Activated CD4-positive, alpha-beta T cell treated with anti-CD3 and anti-CD28 coated beads, Interleukin-2, amount 10 ng/mL, durations not matched to agents 24 days and 14 days (primary cell): ENCODE measurements at regions of chr2 and their contacts with region 1.

Region 1: DNA sequence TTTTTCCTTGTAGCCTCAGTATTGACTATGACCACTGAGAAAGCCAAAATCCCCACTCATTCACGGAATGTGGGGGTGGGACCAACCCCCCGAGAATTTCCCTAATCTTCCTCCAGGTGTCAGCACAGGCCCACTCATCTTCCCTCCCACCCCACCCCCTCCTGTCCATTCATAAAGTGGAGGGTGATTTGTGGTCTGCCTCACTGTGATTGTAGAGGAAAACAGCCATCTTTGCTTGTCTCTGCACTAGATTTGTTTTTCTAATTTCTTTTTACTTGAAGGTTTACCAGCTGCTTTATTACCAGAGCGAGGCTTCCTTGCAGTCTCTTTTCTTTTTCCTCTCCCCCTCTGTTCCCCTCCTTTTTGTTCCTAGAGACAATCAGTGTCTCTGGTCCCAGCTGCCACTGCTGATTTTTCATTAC is 171.8 kb downstream of the ICOS start:
- DNase-seq: peak; percentile 81
- H3K4me3 Mint-ChIP-seq: peak overlapping the region; percentile 75
- H3K27ac Mint-ChIP-seq: peak overlapping the region; percentile 93
- H3K4me1 Mint-ChIP-seq: peaks cover 64% of the 10 kb centered on the region
- H3K27me3 Mint-ChIP-seq: no peaks in the 10 kb centered on the region

Region 2: GRCh38 chr2:203730076-203730729 is 378.1 kb before region 1 on chr2:
- intact Hi-C with region 1: loop called (anchors 10 kb)
- DNase-seq: peak; percentile 71
- H3K4me3 Mint-ChIP-seq: peak overlapping the region; percentile 71
- H3K27ac Mint-ChIP-seq: peak overlapping the region; percentile 96
- H3K4me1 Mint-ChIP-seq: peaks cover 79% of the 10 kb centered on the region
- H3K27me3 Mint-ChIP-seq: no peaks in the 10 kb centered on the region

Region 3: GRCh38 chr2:203989521-203989920 is 118.8 kb before region 1 on chr2:
- intact Hi-C with region 1: loop called (anchors 2 kb)
- DNase-seq: no peak
- H3K4me3 Mint-ChIP-seq: peak overlapping the region; percentile 42
- H3K27ac Mint-ChIP-seq: peak overlapping the region; percentile 77
- H3K4me1 Mint-ChIP-seq: peaks cover 32% of the 10 kb centered on the region
- H3K27me3 Mint-ChIP-seq: no peaks in the 10 kb centered on the region

Region 4: DNA sequence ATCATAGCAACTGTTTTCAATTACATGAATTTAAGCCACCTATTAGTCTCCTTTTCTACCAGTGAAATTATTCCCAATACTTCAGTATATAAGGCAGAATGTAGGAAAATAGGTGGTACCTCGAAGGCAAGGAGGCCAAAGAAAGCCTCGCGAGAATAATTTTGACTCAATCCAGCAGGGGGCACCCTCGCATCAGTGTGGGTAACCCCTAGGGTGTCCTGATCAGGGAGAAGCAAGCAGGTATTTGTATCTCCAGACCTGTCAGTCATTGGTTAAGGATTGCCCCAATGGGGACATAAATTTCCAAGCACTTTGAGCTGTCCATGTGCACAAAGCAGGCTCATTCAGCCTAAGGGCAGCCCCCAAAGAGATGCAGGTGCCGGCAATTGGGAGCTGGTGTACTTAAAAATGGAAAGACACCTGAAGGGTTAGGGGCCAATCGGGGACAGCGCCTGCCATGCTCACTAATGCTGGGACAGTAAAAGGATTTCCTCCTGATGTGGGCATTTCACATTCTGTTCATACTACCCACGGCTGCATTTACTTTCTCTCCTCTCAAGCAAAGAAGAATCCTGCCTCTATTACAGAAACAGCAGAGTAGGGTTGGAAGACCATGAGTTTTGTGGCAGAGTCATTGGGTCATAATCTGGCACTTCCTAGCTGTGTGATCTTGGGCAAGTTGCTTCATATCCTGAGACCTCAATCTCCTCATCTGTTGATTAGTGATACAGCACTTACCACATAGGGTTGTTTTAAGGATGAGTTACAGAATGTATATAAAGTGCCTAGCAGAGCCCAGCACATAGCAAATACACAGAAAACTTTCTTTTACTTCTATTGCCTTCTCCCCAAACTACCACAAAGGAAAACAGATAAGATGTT is 35.7 kb before region 1 on chr2:
- intact Hi-C with region 1: loop called (anchors 5 kb)
- DNase-seq: peak; percentile 91
- H3K4me3 Mint-ChIP-seq: no peak overlapping the region
- H3K27ac Mint-ChIP-seq: peak overlapping the region; percentile 14
- H3K4me1 Mint-ChIP-seq: peaks cover 10% of the 10 kb centered on the region
- H3K27me3 Mint-ChIP-seq: peaks cover 6% of the 10 kb centered on the region

Region 5: GRCh38 chr2:204967199-204967960 is 859.0 kb after region 1 on chr2:
- intact Hi-C with region 1: loop called (anchors 10 kb)
- DNase-seq: peak; percentile 91
- H3K4me3 Mint-ChIP-seq: peak overlapping the region; percentile 57
- H3K27ac Mint-ChIP-seq: peak overlapping the region; percentile 88
- H3K4me1 Mint-ChIP-seq: peaks cover 47% of the 10 kb centered on the region
- H3K27me3 Mint-ChIP-seq: no peaks in the 10 kb centered on the region

Region 6: DNA sequence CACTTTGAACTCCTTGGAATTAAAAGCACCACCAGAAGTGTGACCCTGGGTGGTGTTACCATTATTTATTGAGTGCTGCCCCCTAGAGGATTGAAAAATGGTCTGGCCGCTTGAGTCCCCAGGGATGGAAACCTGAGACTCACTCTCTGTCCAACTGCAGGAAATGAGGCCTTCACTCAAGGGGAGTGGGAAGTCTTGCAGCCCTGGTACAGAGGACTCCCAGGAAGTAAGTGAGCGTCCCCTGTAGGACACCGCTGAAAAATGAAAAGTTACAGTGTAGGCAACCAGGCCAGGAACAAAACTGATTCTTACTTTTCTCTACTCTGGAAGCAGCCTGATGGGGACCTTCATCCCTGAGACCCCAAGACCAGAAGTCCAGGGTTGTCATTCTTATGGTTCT is 1571.7 kb after region 1 on chr2:
- intact Hi-C with region 1: loop called (anchors 10 kb)
- DNase-seq: peak; percentile 88
- H3K4me3 Mint-ChIP-seq: no peak overlapping the region
- H3K27ac Mint-ChIP-seq: peak overlapping the region; percentile 14
- H3K4me1 Mint-ChIP-seq: peaks cover 48% of the 10 kb centered on the region
- H3K27me3 Mint-ChIP-seq: peaks cover 35% of the 10 kb centered on the region